Left cardiac atrium (tissue), 4 donors: ENCODE measurements at regions of chr17 and their contacts with region 1.

Region 1: DNA sequence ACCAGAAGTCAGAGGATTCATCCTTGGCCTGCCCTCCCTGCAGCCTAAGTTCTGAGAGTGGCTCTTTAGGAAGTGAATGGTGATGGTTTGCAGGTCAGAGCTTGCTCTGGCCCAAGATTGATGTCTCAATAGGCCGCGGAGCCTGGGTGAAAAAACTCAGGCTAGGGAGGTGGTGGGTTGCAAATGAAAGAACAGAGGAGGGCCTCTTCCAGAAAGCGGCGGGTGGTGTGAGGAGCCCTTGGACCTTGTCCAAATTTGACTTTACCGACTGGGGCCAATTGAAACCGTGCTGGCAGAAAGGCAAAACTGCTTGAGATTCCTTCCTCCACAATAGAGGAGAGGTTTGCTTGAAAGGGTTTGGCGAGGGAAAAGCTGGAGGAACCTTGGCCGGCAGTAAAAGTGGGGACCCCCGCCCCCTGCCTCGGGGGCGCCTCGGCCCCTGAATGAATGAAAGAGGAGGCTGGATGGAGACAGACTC is 331.3 kb downstream of the SEC14L1 start:
- DNase-seq: peak; percentile 49
- ATAC-seq: peak; percentile 55 to 60

Region 2: DNA sequence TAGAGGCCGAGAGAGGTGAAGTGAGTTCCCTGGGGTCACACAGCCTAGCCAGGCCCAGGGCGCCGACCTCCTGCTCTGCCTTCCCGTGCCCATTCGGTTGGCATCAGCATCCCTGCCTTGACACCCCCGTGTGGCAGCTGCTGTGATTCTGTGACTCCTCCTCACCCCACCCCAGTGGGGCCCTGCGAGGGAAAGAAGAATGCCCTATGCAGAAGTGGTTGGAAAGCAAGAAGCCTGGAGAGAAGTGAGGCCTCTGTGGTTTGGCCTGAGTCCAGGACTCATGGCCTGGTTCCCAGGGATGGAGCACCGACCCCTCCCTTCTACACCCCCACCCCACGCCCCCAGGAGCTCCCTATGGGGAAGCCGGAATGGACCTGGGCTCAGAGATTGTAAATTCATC is 35.0 kb before region 1 on chr17:
- intact Hi-C with region 1: loop called in 1 of 2 experiments (anchors 5 kb)
- DNase-seq: peak; percentile 62
- ATAC-seq: peak; percentile 24 to 28